ENCODE measurements at regions of chr1 and their contacts with region 1.

Region 1: GRCh38 chr1:2586154-2587070 is at the start of gene PRXL2B:
- DNase-seq: peak; percentile 91 to 98
- H3K4me3 ChIP-seq: peak within 1 kb of the TSS; percentile 75
- H3K27ac ChIP-seq: peak within 1 kb of the TSS; percentile 2; the same call in 1 of the 2 replicates
- H3K4me1 ChIP-seq: no peaks in the 10 kb centered on the region
- H3K27me3 ChIP-seq: no peaks in the 10 kb centered on the region
- CTCF ChIP-seq: no peak
- total RNA-seq, gene PRXL2B: 26.1 and 35.3 TPM in 2 replicates

Region 2: DNA sequence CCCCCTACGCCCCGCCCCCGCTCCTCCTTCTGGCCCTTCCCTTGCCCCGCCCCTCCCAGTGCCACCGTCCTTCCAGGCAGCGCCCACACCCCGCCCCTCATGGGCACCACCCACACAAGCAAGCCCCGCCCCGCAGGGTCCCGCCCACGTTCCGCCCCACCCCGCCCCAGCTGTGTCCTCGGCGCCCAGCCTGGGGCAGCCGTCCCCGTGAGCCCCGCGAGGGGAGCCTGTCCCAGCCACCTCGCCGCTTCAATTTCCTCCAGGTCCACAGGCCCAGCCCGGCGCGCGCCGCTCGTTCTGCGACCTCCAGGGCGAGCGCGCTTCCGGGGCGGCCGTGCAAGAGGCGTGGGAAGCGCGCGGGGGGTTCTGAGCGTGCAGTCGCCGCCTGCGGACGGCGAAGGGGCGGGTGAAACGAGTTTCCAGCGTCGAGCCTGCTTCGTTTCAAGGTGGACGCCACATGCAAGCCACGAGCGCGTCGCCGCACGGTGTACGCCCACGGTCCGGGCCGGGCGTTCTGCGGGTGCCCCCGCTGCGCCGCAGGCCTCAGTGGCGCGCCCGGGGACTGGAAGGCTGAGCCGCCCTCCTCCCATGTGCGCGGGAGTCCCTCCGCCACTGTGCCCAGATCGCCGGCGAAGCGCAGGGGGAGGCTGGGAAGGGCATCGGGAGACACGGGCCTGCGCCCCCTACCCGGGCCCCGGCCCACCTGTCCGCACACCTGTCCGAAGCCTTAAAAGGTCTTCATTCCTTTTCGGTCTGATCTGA is 381.0 kb before region 1 on chr1:
- CTCF ChIA-PET with region 1: no interaction called
- POLR2A ChIA-PET with region 1: no interaction called
- intact Hi-C with region 1: loop called (anchors 2 kb)
- DNase-seq: peak; percentile 56 to 90
- H3K4me3 ChIP-seq: peak overlapping the region; percentile 60
- H3K27ac ChIP-seq: no peak overlapping the region
- H3K4me1 ChIP-seq: peaks cover 40% of the 10 kb centered on the region
- H3K27me3 ChIP-seq: no peaks in the 10 kb centered on the region
- CTCF ChIP-seq: no peak

Region 3: GRCh38 chr1:2391041-2391930 is 195.1 kb before region 1 on chr1 and contains the starts of genes MORN1 and RER1:
- CTCF ChIA-PET with region 1: no interaction called
- POLR2A ChIA-PET with region 1: no interaction called
- intact Hi-C with region 1: loop called (anchors 1 kb)
- DNase-seq: peak; percentile 95 to 98
- H3K4me3 ChIP-seq: peak within 1 kb of the TSS; percentile 80
- H3K27ac ChIP-seq: no peak within 1 kb of the TSS
- H3K4me1 ChIP-seq: peaks cover 19% of the 10 kb centered on the region
- H3K27me3 ChIP-seq: no peaks in the 10 kb centered on the region
- CTCF ChIP-seq: no peak
- total RNA-seq, gene MORN1: 47.8 and 51.0 TPM in 2 replicates
- total RNA-seq, gene RER1: 109 and 131 TPM in 2 replicates

Region 4: GRCh38 chr1:2443277-2444137 is 142.9 kb before region 1 on chr1:
- CTCF ChIA-PET with region 1: no interaction called
- POLR2A ChIA-PET with region 1: no interaction called
- intact Hi-C with region 1: no loop called
- DNase-seq: no peak
- H3K4me3 ChIP-seq: no peak overlapping the region
- H3K27ac ChIP-seq: no peak overlapping the region
- H3K4me1 ChIP-seq: no peaks in the 10 kb centered on the region
- H3K27me3 ChIP-seq: peaks cover 34% of the 10 kb centered on the region
- CTCF ChIP-seq: no peak

Region 5: GRCh38 chr1:2525920-2526823 is 60.2 kb before region 1 on chr1 and contains the start of gene PANK4:
- CTCF ChIA-PET with region 1: no interaction called
- POLR2A ChIA-PET with region 1: interaction called, 6 read pairs
- intact Hi-C with region 1: loop called (anchors 2 kb)
- DNase-seq: peak; percentile 80 to 85
- H3K4me3 ChIP-seq: peak within 1 kb of the TSS; percentile 96
- H3K27ac ChIP-seq: no peak within 1 kb of the TSS
- H3K4me1 ChIP-seq: peaks cover 18% of the 10 kb centered on the region
- H3K27me3 ChIP-seq: peaks cover 20% of the 10 kb centered on the region
- CTCF ChIP-seq: no peak; the same call in 1 of the 2 replicates
- total RNA-seq, gene PANK4: 20.5 and 33.4 TPM in 2 replicates

Region 6: GRCh38 chr1:2642560-2643413 is 56.4 kb after region 1 on chr1:
- CTCF ChIA-PET with region 1: no interaction called
- POLR2A ChIA-PET with region 1: no interaction called
- intact Hi-C with region 1: loop called (anchors 10 kb)
- DNase-seq: peak; percentile 63 to 88
- H3K4me3 ChIP-seq: peak overlapping the region; percentile 91
- H3K27ac ChIP-seq: no peak overlapping the region
- H3K4me1 ChIP-seq: 0 out of 2 replicates have a peak, but pooled peaks cover 5% of the 10 kb centered on the region
- H3K27me3 ChIP-seq: peaks cover 16% of the 10 kb centered on the region
- CTCF ChIP-seq: no peak

Measured in PC-9 (cell line).